Activated naive CD4-positive, alpha-beta T cell treated with anti-CD3 and anti-CD28 coated beads, Interleukin-2, amount 10 ng/mL, durations not matched to agents 7 days and 5 days (primary cell): ENCODE measurements at regions of chr11 and their contacts with region 1.

Region 1: GRCh38 chr11:73307323-73308002 is 613 bp upstream of the ARHGEF17 start:
- DNase-seq: peak; percentile 94
- H3K4me3 Mint-ChIP-seq: peak overlapping the region; percentile 85
- H3K27ac Mint-ChIP-seq: no peak overlapping the region
- H3K4me1 Mint-ChIP-seq: peaks cover 10% of the 10 kb centered on the region
- H3K27me3 Mint-ChIP-seq: peaks cover 94% of the 10 kb centered on the region

Region 2: GRCh38 chr11:73295231-73295995 is 12.1 kb before region 1 on chr11:
- CTCF ChIA-PET with region 1: interaction called, 41 read pairs
- DNase-seq: peak; percentile 87
- H3K4me3 Mint-ChIP-seq: no peak overlapping the region
- H3K27ac Mint-ChIP-seq: no peak overlapping the region
- H3K4me1 Mint-ChIP-seq: no peaks in the 10 kb centered on the region
- H3K27me3 Mint-ChIP-seq: peaks cover 68% of the 10 kb centered on the region